Activated CD4-positive, alpha-beta memory T cell treated with anti-CD3 and anti-CD28 coated beads for 36 hours (primary cell): ENCODE measurements at regions of chr9 and their contacts with region 1.

Region 1: GRCh38 chr9:97921959-97922724 is at the start of gene TRMO:
- DNase-seq: peak; percentile 98
- H3K4me3 Mint-ChIP-seq: peak within 1 kb of the TSS; percentile 85
- H3K27ac Mint-ChIP-seq: peak within 1 kb of the TSS; percentile 96
- H3K4me1 Mint-ChIP-seq: peaks cover 39% of the 10 kb centered on the region
- H3K27me3 Mint-ChIP-seq: peaks cover 2% of the 10 kb centered on the region
- total RNA-seq, gene TRMO: 13.3 to 13.4 TPM

Region 2: DNA sequence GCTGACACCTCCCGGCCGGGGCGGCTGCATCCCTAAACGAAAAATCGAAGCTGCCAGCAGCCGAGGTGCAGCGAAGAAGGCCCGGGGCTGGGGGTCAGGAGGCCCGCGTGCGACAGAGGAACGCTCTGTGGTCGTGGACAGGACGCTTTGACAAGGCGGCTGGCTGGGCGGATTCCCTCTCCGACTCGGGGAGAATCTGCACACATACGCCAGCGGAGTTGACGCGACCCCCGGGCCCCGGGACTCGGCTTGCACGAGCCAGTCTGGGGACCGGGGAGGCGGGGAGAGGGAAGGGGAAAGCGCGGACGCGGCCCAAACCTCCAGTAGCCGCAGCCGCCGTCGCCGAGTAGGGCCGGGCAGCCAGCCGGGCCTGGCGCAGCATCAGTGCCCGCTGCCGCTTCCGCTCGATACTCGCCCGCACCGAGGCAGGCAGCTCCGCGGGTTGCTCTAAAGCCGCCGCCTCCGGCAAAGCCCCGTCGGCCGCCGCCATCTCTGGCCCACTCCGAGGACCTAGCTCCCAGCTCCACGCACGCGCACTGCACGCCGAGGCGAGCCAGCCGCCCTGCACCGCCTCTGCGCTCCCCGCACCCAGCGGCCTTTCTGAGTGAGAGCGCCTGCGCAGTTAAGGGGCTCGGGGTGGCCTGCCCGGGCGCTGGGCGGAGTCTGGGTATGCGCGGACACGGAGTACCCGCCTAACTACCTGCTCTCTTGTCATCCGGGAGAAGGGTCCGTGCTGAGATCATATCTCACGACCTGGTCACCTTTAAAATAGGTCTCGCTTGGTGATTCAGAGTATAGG is 225.1 kb before region 1 on chr9 and contains the start of gene XPA:
- CTCF ChIA-PET with region 1: interaction called, 8 read pairs
- POLR2A ChIA-PET with region 1: interaction called, 3 read pairs
- intact Hi-C with region 1: loop called (anchors 1 kb)
- DNase-seq: peak; percentile 98
- H3K4me3 Mint-ChIP-seq: peak within 1 kb of the TSS; percentile 91
- H3K27ac Mint-ChIP-seq: peak within 1 kb of the TSS; percentile 91
- H3K4me1 Mint-ChIP-seq: peaks cover 47% of the 10 kb centered on the region
- H3K27me3 Mint-ChIP-seq: no peaks in the 10 kb centered on the region
- total RNA-seq, gene XPA: 8.5 to 9.6 TPM

Region 3: GRCh38 chr9:97906236-97906831 is 15.8 kb before region 1 on chr9:
- CTCF ChIA-PET with region 1: interaction called, 62 read pairs
- POLR2A ChIA-PET with region 1: interaction called, 26 read pairs
- intact Hi-C with region 1: loop called (anchors 1 kb)
- DNase-seq: peak; percentile 74
- H3K4me3 Mint-ChIP-seq: peak overlapping the region; percentile 66
- H3K27ac Mint-ChIP-seq: peak overlapping the region; percentile 94
- H3K4me1 Mint-ChIP-seq: peaks cover 78% of the 10 kb centered on the region
- H3K27me3 Mint-ChIP-seq: no peaks in the 10 kb centered on the region

Region 4: GRCh38 chr9:97954550-97954989 is 32.4 kb after region 1 on chr9:
- CTCF ChIA-PET with region 1: interaction called, 92 read pairs
- POLR2A ChIA-PET with region 1: no interaction called
- intact Hi-C with region 1: loop called (anchors 1 kb)
- DNase-seq: peak; percentile 66
- H3K4me3 Mint-ChIP-seq: no peak overlapping the region
- H3K27ac Mint-ChIP-seq: no peak overlapping the region
- H3K4me1 Mint-ChIP-seq: peaks cover 4% of the 10 kb centered on the region
- H3K27me3 Mint-ChIP-seq: no peaks in the 10 kb centered on the region

Region 5: GRCh38 chr9:98010445-98010844 is 88.3 kb after region 1 on chr9:
- CTCF ChIA-PET with region 1: interaction called, 17 read pairs
- POLR2A ChIA-PET with region 1: interaction called, 4 read pairs
- intact Hi-C with region 1: no loop called
- DNase-seq: peak; percentile 27
- H3K4me3 Mint-ChIP-seq: no peak overlapping the region
- H3K27ac Mint-ChIP-seq: no peak overlapping the region
- H3K4me1 Mint-ChIP-seq: peaks cover 24% of the 10 kb centered on the region
- H3K27me3 Mint-ChIP-seq: no peaks in the 10 kb centered on the region

Region 6: GRCh38 chr9:98074115-98074990 is 152.2 kb after region 1 on chr9:
- CTCF ChIA-PET with region 1: no interaction called
- POLR2A ChIA-PET with region 1: no interaction called
- intact Hi-C with region 1: loop called (anchors 2 kb)
- DNase-seq: peak; percentile 79
- H3K4me3 Mint-ChIP-seq: no peak overlapping the region
- H3K27ac Mint-ChIP-seq: peak overlapping the region; percentile 93
- H3K4me1 Mint-ChIP-seq: peaks cover 41% of the 10 kb centered on the region
- H3K27me3 Mint-ChIP-seq: no peaks in the 10 kb centered on the region

Region 7: GRCh38 chr9:98796364-98797101 is 874.4 kb after region 1 on chr9 and contains the start of gene ANKS6:
- CTCF ChIA-PET with region 1: no interaction called
- POLR2A ChIA-PET with region 1: no interaction called
- intact Hi-C with region 1: loop called (anchors 10 kb)
- DNase-seq: peak; percentile 84
- H3K4me3 Mint-ChIP-seq: peak within 1 kb of the TSS; percentile 76
- H3K27ac Mint-ChIP-seq: peak within 1 kb of the TSS; percentile 54
- H3K4me1 Mint-ChIP-seq: peaks cover 27% of the 10 kb centered on the region
- H3K27me3 Mint-ChIP-seq: no peaks in the 10 kb centered on the region
- total RNA-seq, gene ANKS6: 13.0 to 16.0 TPM